ENCODE measurements at regions of chr7 and their contacts with region 1.

Region 1: DNA sequence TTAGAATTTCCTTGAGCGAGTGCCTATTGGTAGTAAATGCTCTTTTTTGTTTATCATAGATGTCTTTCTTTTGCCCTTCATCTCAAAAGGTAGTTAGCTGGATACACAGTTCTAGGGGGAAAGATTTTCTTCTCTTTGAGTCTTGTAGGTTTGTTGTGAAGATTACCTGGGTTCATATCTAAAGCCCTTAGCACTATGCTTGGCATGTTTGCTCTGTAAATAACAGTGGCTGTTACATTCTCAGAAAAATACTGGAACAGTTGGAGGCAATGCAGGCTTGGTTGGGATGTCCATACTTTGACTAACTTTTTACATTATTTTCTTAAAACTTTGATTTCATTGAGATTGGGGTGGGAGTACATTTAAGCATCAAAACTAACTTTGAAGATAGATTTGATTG is 144.0 kb downstream of the AUTS2 start:
- DNase-seq: peak in 1 of 2 experiments; percentile 42
- H3K4me3 ChIP-seq: no peak overlapping the region
- H3K4me3 Mint-ChIP-seq: peak overlapping the region; percentile 37
- H3K27ac Mint-ChIP-seq: peak overlapping the region; percentile 29
- H3K4me1 ChIP-seq: peaks cover 49% of the 10 kb centered on the region
- H3K4me1 Mint-ChIP-seq: peaks cover 59% of the 10 kb centered on the region
- H3K27me3 ChIP-seq: no peaks in the 10 kb centered on the region
- H3K27me3 Mint-ChIP-seq: no peaks in the 10 kb centered on the region
- CTCF ChIP-seq: no peak

Region 2: GRCh38 chr7:69338144-69338543 is 404.1 kb before region 1 on chr7:
- CTCF ChIA-PET with region 1: no interaction called
- POLR2A ChIA-PET with region 1: no interaction called
- intact Hi-C with region 1: no loop called
- DNase-seq: no peak
- H3K4me3 ChIP-seq: no peak overlapping the region
- H3K4me3 Mint-ChIP-seq: no peak overlapping the region
- H3K27ac Mint-ChIP-seq: no peak overlapping the region
- H3K4me1 ChIP-seq: no peaks in the 10 kb centered on the region
- H3K4me1 Mint-ChIP-seq: no peaks in the 10 kb centered on the region
- H3K27me3 ChIP-seq: no peaks in the 10 kb centered on the region
- H3K27me3 Mint-ChIP-seq: no peaks in the 10 kb centered on the region
- CTCF ChIP-seq: no peak

Region 3: GRCh38 chr7:69708857-69709256 is 33.4 kb before region 1 on chr7:
- CTCF ChIA-PET with region 1: no interaction called
- POLR2A ChIA-PET with region 1: no interaction called
- intact Hi-C with region 1: no loop called
- DNase-seq: no peak
- H3K4me3 ChIP-seq: no peak overlapping the region
- H3K4me3 Mint-ChIP-seq: no peak overlapping the region
- H3K27ac Mint-ChIP-seq: no peak overlapping the region
- H3K4me1 ChIP-seq: no peaks in the 10 kb centered on the region
- H3K4me1 Mint-ChIP-seq: peaks cover 7% of the 10 kb centered on the region
- H3K27me3 ChIP-seq: no peaks in the 10 kb centered on the region; the same call in none of the 2 replicates
- H3K27me3 Mint-ChIP-seq: peaks cover 38% of the 10 kb centered on the region
- CTCF ChIP-seq: no peak

Region 4: DNA sequence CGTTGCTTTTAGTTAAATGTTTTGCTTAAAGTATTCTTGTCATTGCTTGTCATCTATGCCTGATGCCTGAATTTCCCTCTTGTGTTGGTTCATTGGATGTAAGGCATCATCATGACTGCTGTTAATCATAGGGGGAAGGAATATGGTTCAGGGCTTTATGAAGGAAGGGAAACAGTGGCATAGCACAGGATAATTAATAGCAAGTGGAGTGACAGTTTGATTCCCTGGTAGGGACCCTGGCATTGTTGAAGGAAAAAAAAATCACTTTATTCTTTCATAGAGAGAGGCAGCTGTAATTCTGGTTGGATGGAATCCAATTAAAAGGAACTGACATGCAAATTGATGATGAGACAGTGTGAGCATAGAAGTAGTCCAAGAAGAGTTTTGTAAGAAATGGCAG is 22.6 kb before region 1 on chr7:
- CTCF ChIA-PET with region 1: no interaction called
- POLR2A ChIA-PET with region 1: no interaction called
- intact Hi-C with region 1: no loop called
- DNase-seq: no peak
- H3K4me3 ChIP-seq: no peak overlapping the region
- H3K4me3 Mint-ChIP-seq: no peak overlapping the region
- H3K27ac Mint-ChIP-seq: no peak overlapping the region
- H3K4me1 ChIP-seq: no peaks in the 10 kb centered on the region
- H3K4me1 Mint-ChIP-seq: no peaks in the 10 kb centered on the region
- H3K27me3 ChIP-seq: peaks cover 1% of the 10 kb centered on the region; the same call in 1 of the 2 replicates
- H3K27me3 Mint-ChIP-seq: peaks cover 25% of the 10 kb centered on the region
- CTCF ChIP-seq: no peak

Region 5: GRCh38 chr7:69732222-69732621 is 10.0 kb before region 1 on chr7:
- CTCF ChIA-PET with region 1: no interaction called
- POLR2A ChIA-PET with region 1: interaction called, 4 read pairs
- intact Hi-C with region 1: loop called (anchors 1 kb)
- DNase-seq: peak in 1 of 2 experiments; percentile 38
- H3K4me3 ChIP-seq: no peak overlapping the region
- H3K4me3 Mint-ChIP-seq: no peak overlapping the region
- H3K27ac Mint-ChIP-seq: no peak overlapping the region
- H3K4me1 ChIP-seq: no peaks in the 10 kb centered on the region
- H3K4me1 Mint-ChIP-seq: peaks cover 8% of the 10 kb centered on the region
- H3K27me3 ChIP-seq: no peaks in the 10 kb centered on the region
- H3K27me3 Mint-ChIP-seq: no peaks in the 10 kb centered on the region
- CTCF ChIP-seq: no peak

Region 6: DNA sequence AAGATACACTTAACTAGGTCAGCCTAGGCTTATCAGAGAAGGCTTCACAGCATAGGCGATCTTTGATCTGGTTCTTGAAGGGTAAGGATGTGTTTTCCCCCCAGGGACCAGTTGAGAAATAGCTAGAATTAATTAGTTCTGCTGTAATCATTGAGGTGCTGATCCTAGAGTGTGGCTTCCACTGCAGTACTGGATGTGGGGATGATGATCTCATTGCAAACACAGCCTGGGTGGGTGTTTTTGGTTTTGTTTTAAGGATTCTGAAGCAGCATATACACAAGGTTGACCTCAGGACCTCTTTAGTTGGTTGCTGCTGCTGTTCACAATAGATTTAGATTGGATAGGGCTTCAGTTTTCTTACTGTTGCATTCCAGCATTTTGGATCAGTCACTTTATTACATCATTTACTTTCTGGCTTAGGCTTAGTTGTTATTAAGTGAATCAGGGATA is 15.8 kb after region 1 on chr7:
- CTCF ChIA-PET with region 1: no interaction called
- POLR2A ChIA-PET with region 1: no interaction called
- intact Hi-C with region 1: loop called (anchors 2 kb)
- DNase-seq: no peak
- H3K4me3 ChIP-seq: no peak overlapping the region
- H3K4me3 Mint-ChIP-seq: no peak overlapping the region
- H3K27ac Mint-ChIP-seq: no peak overlapping the region
- H3K4me1 ChIP-seq: no peaks in the 10 kb centered on the region; the same call in 1 of the 2 replicates
- H3K4me1 Mint-ChIP-seq: peaks cover 19% of the 10 kb centered on the region
- H3K27me3 ChIP-seq: no peaks in the 10 kb centered on the region
- H3K27me3 Mint-ChIP-seq: no peaks in the 10 kb centered on the region
- CTCF ChIP-seq: no peak

Region 7: DNA sequence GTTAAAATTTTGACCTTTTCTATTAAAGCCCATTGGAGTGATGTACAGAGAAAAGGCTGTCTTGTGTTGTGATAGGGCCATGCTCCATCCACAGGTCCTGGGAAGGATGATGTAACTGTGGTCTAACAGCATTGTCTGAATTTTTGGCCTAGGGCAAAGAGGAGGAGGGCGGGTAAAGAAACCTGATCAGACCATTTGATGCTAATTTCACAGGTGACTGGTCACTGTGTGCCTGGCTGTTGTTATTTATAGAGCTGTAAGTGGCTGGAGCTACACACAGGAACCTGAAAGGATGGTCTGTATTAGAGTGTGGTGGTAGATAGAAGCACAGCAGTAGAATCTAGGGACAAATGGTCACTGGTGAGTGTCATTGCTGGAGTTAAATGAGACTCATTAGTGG is 38.1 kb after region 1 on chr7:
- CTCF ChIA-PET with region 1: no interaction called
- POLR2A ChIA-PET with region 1: no interaction called
- intact Hi-C with region 1: loop called (anchors 2 kb)
- DNase-seq: peak; percentile 75 to 81
- H3K4me3 ChIP-seq: no peak overlapping the region
- H3K4me3 Mint-ChIP-seq: no peak overlapping the region
- H3K27ac Mint-ChIP-seq: peak overlapping the region; percentile 69
- H3K4me1 ChIP-seq: peaks cover 15% of the 10 kb centered on the region
- H3K4me1 Mint-ChIP-seq: peaks cover 23% of the 10 kb centered on the region
- H3K27me3 ChIP-seq: no peaks in the 10 kb centered on the region
- H3K27me3 Mint-ChIP-seq: no peaks in the 10 kb centered on the region
- CTCF ChIP-seq: no peak